CD4-positive, alpha-beta memory T cell (primary cell): ENCODE measurements at regions of chrX and their contacts with region 1.

Region 1: DNA sequence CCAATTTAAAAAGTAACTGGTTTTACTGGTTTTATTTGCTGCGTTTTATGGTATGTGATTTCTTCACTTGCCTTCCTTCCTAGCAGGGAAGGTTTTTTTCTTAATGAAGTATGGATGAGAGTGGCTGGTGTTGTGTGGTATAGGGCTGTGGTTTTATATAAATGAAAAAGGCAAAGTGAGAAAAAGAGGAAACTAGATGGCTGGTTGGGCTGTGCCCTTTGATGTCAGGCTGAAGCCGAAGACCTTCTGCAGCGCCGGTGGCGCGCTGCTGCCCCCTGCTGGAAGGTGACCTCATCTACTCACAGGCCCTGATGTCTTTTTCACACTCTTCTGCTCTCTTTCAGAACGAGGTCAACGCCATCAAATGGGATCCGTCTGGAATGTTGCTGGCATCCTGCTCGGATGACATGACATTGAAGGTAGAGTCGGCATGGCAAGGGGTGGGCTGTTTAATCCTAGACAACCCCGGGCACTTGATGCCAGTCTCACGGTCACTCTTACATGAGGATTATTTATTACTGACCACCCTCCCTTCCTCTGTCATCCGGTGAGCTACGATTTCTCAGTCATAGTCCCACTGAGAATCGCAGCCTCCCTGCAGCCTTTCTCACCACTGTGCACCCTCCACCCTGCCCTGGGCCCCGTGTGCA is 56.6 kb downstream of the GPR143 start:
- DNase-seq: peak; percentile 71 to 80 (median 79)
- H3K4me3 ChIP-seq: no peak overlapping the region
- H3K4me3 Mint-ChIP-seq: peak overlapping the region in 3 of 8 donors; percentile 7 to 57 (median 35)
- H3K27ac ChIP-seq: no peak overlapping the region
- H3K27ac Mint-ChIP-seq: peak overlapping the region in 4 of 7 donors; percentile 14 to 92 (median 42)
- H3K4me1 ChIP-seq: peaks cover 6% of the 10 kb centered on the region
- H3K4me1 Mint-ChIP-seq: peaks cover 5 to 13% (median 11%) of the 10 kb centered on the region in 4 donors
- H3K27me3 ChIP-seq: no peaks in the 10 kb centered on the region
- H3K27me3 Mint-ChIP-seq: no peaks in the 10 kb centered on the region

Region 2: DNA sequence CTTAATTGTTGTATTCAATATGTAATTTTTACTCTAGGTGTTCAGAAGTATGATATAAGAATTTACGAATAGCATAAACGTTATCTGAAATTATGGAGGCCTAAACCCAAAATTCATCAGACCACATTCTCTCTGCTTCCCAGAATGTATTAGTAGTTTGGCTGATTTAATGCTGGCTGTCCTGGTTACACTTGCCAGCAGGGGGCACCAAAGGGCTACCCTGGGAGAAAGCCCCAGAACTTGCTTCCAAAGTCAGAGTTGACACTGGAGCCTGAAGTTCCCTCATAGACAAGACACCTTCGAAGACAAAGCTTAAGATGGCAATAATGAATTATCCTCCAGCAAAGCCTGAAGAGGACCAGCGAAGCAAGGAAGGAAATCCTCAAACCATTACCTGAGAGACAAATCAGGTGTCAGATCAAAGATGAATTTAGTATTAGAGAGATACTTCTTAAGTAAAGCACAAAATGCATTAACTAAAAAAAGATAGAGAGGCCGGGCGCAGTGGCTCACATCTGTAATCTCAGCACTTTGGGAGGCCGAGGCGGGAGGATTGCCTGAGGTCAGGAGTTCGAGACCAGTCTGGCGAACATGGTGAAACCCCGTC is 965.8 kb before region 1 on chrX:
- CTCF ChIA-PET with region 1: interaction called, 3 read pairs
- POLR2A ChIA-PET with region 1: no interaction called
- intact Hi-C with region 1: loop called (anchors 1 kb)
- DNase-seq: peak; percentile 43 to 58 (median 51)
- H3K4me3 ChIP-seq: no peak overlapping the region
- H3K4me3 Mint-ChIP-seq: no peak overlapping the region
- H3K27ac ChIP-seq: no peak overlapping the region
- H3K27ac Mint-ChIP-seq: no peak overlapping the region
- H3K4me1 ChIP-seq: no peaks in the 10 kb centered on the region
- H3K4me1 Mint-ChIP-seq: no peaks in the 10 kb centered on the region
- H3K27me3 ChIP-seq: no peaks in the 10 kb centered on the region
- H3K27me3 Mint-ChIP-seq: peaks cover 5 to 7% of the 10 kb centered on the region in 2 donors

Region 3: DNA sequence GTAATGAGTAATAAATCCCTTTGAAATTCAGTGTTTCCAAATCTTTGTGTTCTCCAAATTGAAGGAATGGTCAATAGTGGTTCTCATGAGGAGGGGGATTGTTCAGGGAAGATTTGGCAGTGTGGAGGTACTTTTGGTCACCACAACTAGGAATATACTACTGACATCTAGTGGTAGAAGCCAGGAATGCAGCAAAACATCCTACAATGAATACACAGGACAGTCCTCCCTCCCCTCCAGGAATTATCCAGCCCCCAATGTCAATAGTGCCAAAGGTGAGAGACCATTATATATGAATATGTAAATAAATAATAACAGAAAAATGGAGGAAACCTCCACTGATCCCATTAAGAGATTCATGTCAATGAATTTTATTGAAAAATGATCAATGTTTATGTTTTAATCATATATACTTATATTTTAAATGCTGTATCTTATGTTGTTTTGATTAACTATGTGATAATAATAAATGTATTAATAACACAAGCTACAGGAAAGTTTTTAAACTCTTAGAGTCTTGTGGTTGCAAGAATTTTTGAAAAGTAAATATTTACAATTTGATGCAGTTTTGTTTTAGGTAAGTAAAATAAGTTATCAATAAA is 893.5 kb before region 1 on chrX:
- CTCF ChIA-PET with region 1: interaction called, 5 read pairs
- POLR2A ChIA-PET with region 1: no interaction called
- intact Hi-C with region 1: loop called (anchors 1 kb)
- DNase-seq: peak in 4 of 5 donors; percentile 18 to 40 (median 32)
- H3K4me3 ChIP-seq: no peak overlapping the region
- H3K4me3 Mint-ChIP-seq: no peak overlapping the region
- H3K27ac ChIP-seq: no peak overlapping the region
- H3K27ac Mint-ChIP-seq: no peak overlapping the region
- H3K4me1 ChIP-seq: no peaks in the 10 kb centered on the region
- H3K4me1 Mint-ChIP-seq: no peaks in the 10 kb centered on the region
- H3K27me3 ChIP-seq: no peaks in the 10 kb centered on the region
- H3K27me3 Mint-ChIP-seq: peaks cover 0 to 2% of the 10 kb centered on the region in 2 donors

Region 4: GRCh38 chrX:9312922-9313867 is 395.8 kb before region 1 on chrX:
- CTCF ChIA-PET with region 1: interaction called, 4 read pairs
- POLR2A ChIA-PET with region 1: no interaction called
- intact Hi-C with region 1: loop called (anchors 2 kb)
- DNase-seq: peak; percentile 60 to 72 (median 67)
- H3K4me3 ChIP-seq: no peak overlapping the region
- H3K4me3 Mint-ChIP-seq: peak overlapping the region in 4 of 8 donors; percentile 62 to 77 (median 66)
- H3K27ac ChIP-seq: no peak overlapping the region
- H3K27ac Mint-ChIP-seq: peak overlapping the region in 3 of 7 donors; percentile 9 to 53 (median 23)
- H3K4me1 ChIP-seq: no peaks in the 10 kb centered on the region
- H3K4me1 Mint-ChIP-seq: peaks cover 11 to 16% (median 12%) of the 10 kb centered on the region in 4 donors
- H3K27me3 ChIP-seq: no peaks in the 10 kb centered on the region
- H3K27me3 Mint-ChIP-seq: no peaks in the 10 kb centered on the region

Region 5: DNA sequence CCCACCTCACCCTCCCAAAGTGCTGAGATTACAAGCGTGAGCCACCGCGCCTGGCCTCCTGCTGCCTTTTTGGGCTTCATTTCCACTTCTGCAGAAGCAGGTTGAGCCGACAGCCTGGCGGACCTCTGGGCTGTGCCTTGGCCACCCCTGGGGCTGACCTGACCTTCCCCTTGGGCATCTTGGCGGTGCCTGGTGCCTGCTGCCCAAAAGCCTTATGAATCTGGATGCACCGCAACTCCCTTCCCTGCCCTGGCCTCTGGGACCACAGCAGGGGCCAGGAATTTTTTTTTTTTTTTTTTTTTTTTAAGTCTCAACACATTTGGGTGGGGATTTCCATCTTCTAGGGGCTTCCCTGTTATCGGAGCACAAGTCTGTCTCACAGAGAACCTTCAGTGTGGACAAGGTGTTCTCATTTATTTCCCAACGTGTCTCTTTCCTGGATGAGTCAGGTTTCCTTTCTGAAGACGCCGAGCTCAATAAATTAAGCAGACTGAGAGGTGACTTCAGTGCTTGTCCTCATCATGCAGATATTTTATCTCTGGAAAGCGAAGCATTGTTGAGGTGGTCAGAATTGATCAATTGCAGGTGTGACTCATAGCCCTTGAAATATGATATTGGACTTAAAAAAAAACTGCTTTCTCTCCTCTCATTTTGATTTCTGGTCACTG is 156.9 kb after region 1 on chrX:
- CTCF ChIA-PET with region 1: no interaction called
- POLR2A ChIA-PET with region 1: no interaction called
- intact Hi-C with region 1: no loop called
- DNase-seq: no peak
- H3K4me3 ChIP-seq: no peak overlapping the region
- H3K4me3 Mint-ChIP-seq: no peak overlapping the region
- H3K27ac ChIP-seq: no peak overlapping the region
- H3K27ac Mint-ChIP-seq: no peak overlapping the region
- H3K4me1 ChIP-seq: no peaks in the 10 kb centered on the region
- H3K4me1 Mint-ChIP-seq: no peaks in the 10 kb centered on the region
- H3K27me3 ChIP-seq: no peaks in the 10 kb centered on the region
- H3K27me3 Mint-ChIP-seq: peaks cover 18 to 20% of the 10 kb centered on the region in 2 donors